ENCODE measurements at regions of chr17 and their contacts with region 1.

Region 1: DNA sequence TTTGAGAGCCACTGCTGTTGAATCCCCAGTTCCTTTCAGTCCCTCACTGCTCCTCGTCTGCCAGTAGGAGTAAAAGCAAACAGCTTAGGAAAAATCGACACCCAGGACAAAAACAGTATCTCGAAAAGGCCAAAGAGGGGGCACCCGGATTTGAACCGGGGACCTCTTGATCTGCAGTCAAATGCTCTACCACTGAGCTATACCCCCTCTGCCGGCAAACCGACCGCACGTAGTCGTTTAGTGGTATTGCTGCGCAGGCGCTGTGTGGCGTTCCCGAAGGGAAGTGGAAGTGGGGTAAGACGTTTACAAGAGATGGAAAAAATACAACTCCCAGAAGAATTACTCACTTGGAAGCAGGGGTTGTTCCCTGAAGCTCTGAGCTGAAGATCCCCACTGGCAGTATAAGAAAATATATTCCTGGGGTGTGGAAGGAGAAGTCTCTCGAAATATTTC is 2.2 kb upstream of the PLXDC1 start:
- DNase-seq: peak; percentile 65

Region 2: GRCh38 chr17:38853292-38854219 is 300.1 kb before region 1 on chr17 and contains the start of gene RPL23:
- CTCF ChIA-PET with region 1: no interaction called
- POLR2A ChIA-PET with region 1: interaction called, 13 read pairs
- DNase-seq: peak; percentile 80

Region 3: DNA sequence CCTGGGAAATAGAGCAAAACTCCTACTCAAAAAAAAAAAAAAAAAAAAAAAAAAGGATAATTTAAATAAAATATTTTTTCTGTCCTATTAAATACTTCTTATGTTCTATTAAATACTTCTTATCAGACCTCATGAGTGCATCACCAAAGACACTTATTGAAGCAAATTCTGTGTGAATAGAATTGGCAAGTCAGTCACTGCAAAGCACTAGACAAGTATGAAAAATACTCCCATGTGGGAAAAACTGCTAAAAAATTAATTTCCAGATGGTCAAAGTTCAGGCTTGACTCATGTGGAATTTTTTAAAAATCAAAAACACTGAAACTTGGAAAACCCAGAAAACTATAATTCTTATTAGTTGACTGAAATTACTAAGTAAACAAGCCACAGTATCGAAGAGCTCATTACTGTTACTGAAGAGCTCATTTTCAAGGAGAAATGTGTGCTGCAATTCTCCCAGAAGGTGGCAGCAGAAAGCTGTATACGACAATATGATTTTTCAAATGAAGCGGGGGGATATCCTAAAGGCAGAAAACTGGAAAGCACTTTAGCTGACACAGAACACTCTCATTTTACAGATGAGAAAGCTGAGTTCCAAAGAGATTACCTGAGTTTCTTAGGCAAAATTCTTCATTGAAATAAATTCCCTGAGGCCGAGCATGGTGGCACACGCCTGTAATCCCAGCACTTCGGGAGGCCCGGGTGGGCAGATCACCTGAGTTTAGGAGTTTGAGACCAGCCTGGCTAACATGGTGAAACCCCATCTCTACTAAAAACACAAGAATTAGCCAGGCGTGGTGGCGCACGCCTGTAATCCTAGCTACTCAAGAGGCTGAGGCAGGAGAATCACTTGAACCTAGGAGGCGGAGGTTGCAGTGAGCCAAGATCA is 170.5 kb before region 1 on chr17:
- CTCF ChIA-PET with region 1: interaction called, 89 read pairs
- POLR2A ChIA-PET with region 1: interaction called, 13 read pairs
- DNase-seq: peak; percentile 44

Region 4: GRCh38 chr17:39164675-39165143 is 11.1 kb after region 1 on chr17:
- CTCF ChIA-PET with region 1: interaction called, 26 read pairs
- POLR2A ChIA-PET with region 1: interaction called, 22 read pairs
- DNase-seq: peak; percentile 80

Region 5: DNA sequence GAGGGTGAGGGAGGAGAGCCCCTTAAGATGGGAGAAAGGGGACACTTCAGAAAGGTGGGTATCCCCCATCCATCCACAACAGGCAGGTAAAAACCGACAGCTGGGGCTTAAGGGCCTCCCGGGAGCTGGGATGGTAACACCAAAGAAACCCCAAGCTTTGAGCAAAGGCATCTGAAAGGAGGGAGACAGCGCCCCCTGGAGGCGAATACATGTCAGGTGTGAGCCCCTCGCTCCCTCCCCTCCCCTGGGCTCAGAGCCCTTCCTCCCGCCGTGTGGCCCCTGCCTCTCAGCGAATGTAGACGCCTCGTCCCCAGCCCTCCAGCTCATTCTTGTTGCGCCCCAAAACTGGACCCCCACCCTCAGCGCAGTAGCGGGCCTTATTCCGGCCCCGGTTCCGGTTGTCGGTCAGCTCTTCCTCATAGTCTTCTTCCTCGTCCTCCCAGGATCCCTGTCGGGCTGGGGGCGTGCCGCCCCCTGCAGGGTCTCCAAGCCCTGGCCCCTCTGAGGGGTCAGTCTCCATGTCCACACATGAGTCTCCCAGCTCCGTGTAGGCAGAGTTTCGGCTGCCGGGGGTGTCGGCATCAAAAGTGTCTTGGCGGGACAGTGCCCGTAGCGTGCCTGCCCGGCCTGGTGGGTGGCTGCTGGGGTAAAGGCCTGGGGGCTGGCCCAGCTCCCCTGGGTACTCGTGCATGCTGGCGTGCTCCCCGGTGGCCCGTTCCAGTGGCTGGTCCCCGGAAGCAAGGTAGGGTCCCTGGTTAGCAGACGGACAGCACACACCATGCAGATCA is 21.5 kb after region 1 on chr17:
- CTCF ChIA-PET with region 1: interaction called, 12 read pairs
- POLR2A ChIA-PET with region 1: interaction called, 6 read pairs
- DNase-seq: peak; percentile 79

Region 6: GRCh38 chr17:39194089-39194984 is 40.7 kb after region 1 on chr17:
- CTCF ChIA-PET with region 1: interaction called, 13 read pairs
- POLR2A ChIA-PET with region 1: interaction called, 17 read pairs
- DNase-seq: peak; percentile 67

Region 7: DNA sequence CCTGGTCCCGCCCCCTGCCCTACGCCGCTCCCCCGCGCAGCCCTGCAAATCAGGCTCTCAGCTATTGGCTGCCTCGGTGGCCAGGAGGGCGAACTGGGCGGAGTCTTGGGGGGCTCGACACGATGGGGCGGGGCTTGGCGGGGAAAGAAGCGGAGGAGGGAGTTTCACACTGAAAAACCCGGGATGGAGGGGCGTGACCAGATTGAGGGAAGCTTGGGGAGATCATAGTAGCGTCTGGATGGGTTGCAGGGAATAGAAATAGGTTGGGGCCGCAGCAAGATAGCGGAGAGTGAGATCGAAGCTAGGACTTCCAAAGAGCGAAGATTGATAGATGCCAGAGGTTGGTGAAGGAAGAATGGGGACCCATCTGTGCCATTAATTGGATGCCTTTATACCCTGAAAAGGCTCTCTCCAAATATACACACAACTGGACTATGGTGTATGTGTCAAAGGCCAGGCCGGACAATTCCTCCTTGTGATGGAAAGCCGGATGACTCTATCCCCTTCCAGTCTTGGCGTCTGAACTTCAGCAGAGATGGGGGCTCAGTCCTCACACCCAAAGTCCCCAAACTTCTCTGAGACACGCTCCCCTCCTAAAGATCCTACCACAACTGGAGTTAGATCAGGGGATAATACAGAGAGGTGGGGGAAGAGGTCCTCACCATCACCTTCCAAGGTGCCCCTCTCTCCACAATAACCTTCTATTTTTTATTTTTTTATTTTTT is 72.5 kb after region 1 on chr17:
- CTCF ChIA-PET with region 1: no interaction called
- POLR2A ChIA-PET with region 1: no interaction called
- DNase-seq: peak; percentile 83